GM12878 (cell line): ENCODE measurements at regions of chr12 and their contacts with region 1.

Region 1: GRCh38 chr12:49188914-49189367 is at the start of gene TUBA1A:
- DNase-seq: peak; percentile 75
- ATAC-seq: peak; percentile 93
- H3K4me3 ChIP-seq: peak within 1 kb of the TSS; percentile 75
- H3K27ac ChIP-seq: peak within 1 kb of the TSS; percentile 72
- H3K4me1 ChIP-seq: no peaks in the 10 kb centered on the region; the same call in none of the 2 replicates
- H3K27me3 ChIP-seq: no peaks in the 10 kb centered on the region; a peak in 1 of 4 replicates
- CTCF ChIP-seq: no peak
- EP300 ChIP-seq: no peak
- POLR2A ChIP-seq: peak; percentile 96
- RAD21 ChIP-seq: no peak
- polyA plus RNA-seq, gene TUBA1A: 431 to 496 TPM

Region 2: GRCh38 chr12:49138587-49138986 is 50.4 kb before region 1 on chr12:
- CTCF ChIA-PET with region 1: interaction called, 3 read pairs
- POLR2A ChIA-PET with region 1: interaction called, 4 read pairs
- RAD21 ChIA-PET with region 1: interaction called, 7 read pairs
- SMC1A ChIA-PET with region 1: no interaction called
- in situ Hi-C with region 1: no loop called
- intact Hi-C with region 1: loop called (anchors 2 kb)
- DNase-seq: no peak
- ATAC-seq: peak; percentile 76
- H3K4me3 ChIP-seq: no peak overlapping the region
- H3K27ac ChIP-seq: no peak overlapping the region
- H3K4me1 ChIP-seq: peaks cover 5% of the 10 kb centered on the region
- H3K27me3 ChIP-seq: no peaks in the 10 kb centered on the region
- CTCF ChIP-seq: no peak
- EP300 ChIP-seq: no peak
- POLR2A ChIP-seq: no peak
- RAD21 ChIP-seq: no peak

Region 3: DNA sequence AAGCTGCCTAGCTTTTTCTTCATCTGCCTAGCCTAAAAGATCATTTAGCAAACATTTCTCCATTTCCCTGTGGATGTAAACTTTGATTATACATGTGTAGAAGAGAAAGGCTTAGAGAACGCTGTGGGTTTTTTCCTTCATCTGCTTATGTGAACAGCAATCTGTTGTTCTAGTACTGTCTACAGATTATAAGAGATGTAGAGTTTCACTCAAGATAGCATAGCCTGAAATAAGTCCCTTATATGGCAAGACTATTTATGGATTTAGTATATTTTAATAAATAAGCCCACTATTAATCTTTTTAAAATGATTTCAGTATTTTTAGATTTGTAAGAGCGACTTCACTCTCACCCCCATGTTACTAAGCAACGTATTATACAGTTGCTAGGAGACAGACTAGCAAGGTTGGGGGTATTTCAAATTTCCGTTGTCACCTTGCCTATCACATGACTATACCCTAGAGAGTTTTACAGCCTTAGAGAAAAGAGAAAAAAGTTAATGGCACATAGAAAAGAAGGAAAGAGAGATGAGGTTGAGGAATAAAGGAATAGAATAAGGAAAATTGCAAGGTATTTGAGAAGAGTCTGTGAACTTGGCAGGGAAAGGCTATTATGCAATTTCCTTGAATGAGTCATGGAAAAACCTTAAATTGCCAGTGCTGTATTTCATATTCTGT is 12.1 kb after region 1 on chr12:
- CTCF ChIA-PET with region 1: interaction called, 13 read pairs
- POLR2A ChIA-PET with region 1: interaction called, 4 read pairs
- RAD21 ChIA-PET with region 1: no interaction called
- SMC1A ChIA-PET with region 1: interaction called, 3 read pairs
- in situ Hi-C with region 1: no loop called
- intact Hi-C with region 1: no loop called
- DNase-seq: peak; percentile 17
- ATAC-seq: peak; percentile 88
- H3K4me3 ChIP-seq: no peak overlapping the region
- H3K27ac ChIP-seq: no peak overlapping the region
- H3K4me1 ChIP-seq: no peaks in the 10 kb centered on the region
- H3K27me3 ChIP-seq: peaks cover 0 to 2% of the 10 kb centered on the region in 2 experiments; a peak in 1 of 4 replicates
- CTCF ChIP-seq: no peak
- EP300 ChIP-seq: 0 out of 4 replicates have a peak, but pooled peaks of 1 of the 2 experiments have one; percentile 27
- POLR2A ChIP-seq: no peak
- RAD21 ChIP-seq: no peak